Psoas muscle (tissue), 8 donors: ENCODE measurements at regions of chr1 and their contacts with region 1.

Region 1: GRCh38 chr1:156054500-156055280 is at the start of gene LAMTOR2:
- DNase-seq: peak; percentile 99
- ATAC-seq: peak; percentile 85 to 91 (median 90)
- H3K4me3 ChIP-seq: peak within 1 kb of the TSS; percentile 97
- H3K27ac ChIP-seq: peak within 1 kb of the TSS; percentile 96
- H3K4me1 ChIP-seq: peaks cover 28% of the 10 kb centered on the region
- H3K27me3 ChIP-seq: no peaks in the 10 kb centered on the region
- CTCF ChIP-seq: no peak
- total RNA-seq, gene LAMTOR2: 46.1 to 63.9 (median 51.2) TPM

Region 2: GRCh38 chr1:156014826-156015225 is 39.9 kb before region 1 on chr1:
- intact Hi-C with region 1: loop called in 1 of 2 experiments (anchors 5 kb)
- DNase-seq: no peak
- ATAC-seq: no peak
- H3K4me3 ChIP-seq: no peak overlapping the region
- H3K27ac ChIP-seq: no peak overlapping the region
- H3K4me1 ChIP-seq: peaks cover 5% of the 10 kb centered on the region
- H3K27me3 ChIP-seq: no peaks in the 10 kb centered on the region
- CTCF ChIP-seq: no peak

Region 3: DNA sequence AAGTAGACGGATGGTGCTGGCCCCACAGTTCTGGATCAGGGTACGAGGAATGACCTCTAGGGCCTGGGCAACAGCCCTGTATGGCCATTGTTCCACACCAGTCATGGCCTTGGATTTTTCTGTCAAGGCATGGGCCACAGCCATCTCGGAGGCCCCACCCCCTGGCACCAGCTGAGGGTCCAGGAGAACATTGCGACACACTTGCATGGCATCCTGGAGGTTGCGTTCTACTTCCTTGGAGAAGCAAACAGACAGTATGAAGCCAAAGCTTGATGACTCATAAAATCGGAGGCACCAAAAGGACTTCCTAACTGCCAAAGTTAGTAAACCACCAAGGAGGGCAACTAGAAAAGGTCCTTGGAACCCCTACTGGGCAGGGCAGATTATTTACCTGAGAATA is 256.3 kb after region 1 on chr1:
- intact Hi-C with region 1: no loop called
- DNase-seq: peak; percentile 60 to 83
- ATAC-seq: peak; percentile 81 to 95 (median 90)
- H3K4me3 ChIP-seq: no peak overlapping the region
- H3K27ac ChIP-seq: no peak overlapping the region
- H3K4me1 ChIP-seq: no peaks in the 10 kb centered on the region
- H3K27me3 ChIP-seq: no peaks in the 10 kb centered on the region
- CTCF ChIP-seq: no peak